IMR-90 (cell line): ENCODE measurements at regions of chr2 and their contacts with region 1.

Region 1: GRCh38 chr2:64644177-64645004 is 9.3 kb downstream of the SERTAD2 start:
- DNase-seq: peak; percentile 81
- ATAC-seq: peak; percentile 92
- H3K4me3 ChIP-seq: peak overlapping the region; percentile 40
- H3K27ac ChIP-seq: peak overlapping the region; percentile 84
- H3K4me1 ChIP-seq: peaks cover 15% of the 10 kb centered on the region
- H3K27me3 ChIP-seq: no peaks in the 10 kb centered on the region
- CTCF ChIP-seq: no peak
- POLR2A ChIP-seq: peak; percentile 70
- RAD21 ChIP-seq: 0 out of 2 replicates have a peak, but pooled peaks have one; percentile 1

Region 2: GRCh38 chr2:63257473-63257872 is 1386.9 kb before region 1 on chr2:
- CTCF ChIA-PET with region 1: no interaction called
- POLR2A ChIA-PET with region 1: no interaction called
- dilution Hi-C with region 1: no loop called
- in situ Hi-C with region 1: no loop called
- intact Hi-C with region 1: no loop called
- DNase-seq: no peak
- ATAC-seq: no peak
- H3K4me3 ChIP-seq: no peak overlapping the region
- H3K27ac ChIP-seq: no peak overlapping the region
- H3K4me1 ChIP-seq: no peaks in the 10 kb centered on the region
- H3K27me3 ChIP-seq: no peaks in the 10 kb centered on the region
- CTCF ChIP-seq: no peak
- POLR2A ChIP-seq: no peak
- RAD21 ChIP-seq: no peak

Region 3: GRCh38 chr2:64523666-64524603 is 120.5 kb before region 1 on chr2 and contains the start of gene AFTPH:
- CTCF ChIA-PET with region 1: no interaction called
- POLR2A ChIA-PET with region 1: no interaction called
- dilution Hi-C with region 1: no loop called
- in situ Hi-C with region 1: no loop called
- intact Hi-C with region 1: loop called (anchors 2 kb)
- DNase-seq: peak; percentile 98
- ATAC-seq: peak; percentile 98
- H3K4me3 ChIP-seq: peak within 1 kb of the TSS; percentile 87
- H3K27ac ChIP-seq: peak within 1 kb of the TSS; percentile 68
- H3K4me1 ChIP-seq: no peaks in the 10 kb centered on the region
- H3K27me3 ChIP-seq: peaks cover 5% of the 10 kb centered on the region
- CTCF ChIP-seq: no peak
- POLR2A ChIP-seq: peak; percentile 60
- RAD21 ChIP-seq: no peak
- total RNA-seq, gene AFTPH: 19.9 and 21.9 TPM in 2 replicates

Region 4: DNA sequence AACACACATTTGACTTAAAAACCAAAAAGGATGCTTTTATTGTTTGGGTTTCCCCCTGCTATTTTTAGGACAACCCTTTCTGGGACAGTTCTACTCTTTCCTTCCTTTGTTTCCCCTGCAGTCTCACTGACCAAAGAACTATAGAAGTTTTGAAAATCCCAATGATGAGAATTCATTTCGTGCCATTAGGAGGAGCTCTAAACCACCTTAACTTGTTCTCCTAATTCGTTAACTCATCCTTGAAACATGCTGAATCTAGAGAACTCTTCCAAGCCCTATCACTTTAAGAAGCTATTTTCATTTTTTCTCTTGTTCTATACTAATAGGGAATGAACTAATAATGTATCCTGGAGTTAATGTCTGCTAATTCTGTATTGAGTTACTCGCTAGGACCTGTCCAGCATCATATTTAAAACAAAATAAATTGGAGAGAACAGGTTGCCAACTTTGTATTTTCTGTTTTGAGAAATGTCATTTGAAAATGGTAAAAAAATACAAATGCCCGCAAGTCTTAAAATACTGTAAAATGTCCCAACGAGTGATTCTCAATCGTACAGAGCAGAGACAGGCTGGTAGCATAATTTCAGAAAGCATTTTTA is 57.4 kb before region 1 on chr2:
- CTCF ChIA-PET with region 1: interaction called, 4 read pairs
- POLR2A ChIA-PET with region 1: no interaction called
- dilution Hi-C with region 1: no loop called
- in situ Hi-C with region 1: no loop called
- intact Hi-C with region 1: loop called (anchors 1 kb)
- DNase-seq: peak; percentile 72
- ATAC-seq: peak; percentile 80
- H3K4me3 ChIP-seq: no peak overlapping the region
- H3K27ac ChIP-seq: no peak overlapping the region
- H3K4me1 ChIP-seq: no peaks in the 10 kb centered on the region
- H3K27me3 ChIP-seq: no peaks in the 10 kb centered on the region
- CTCF ChIP-seq: peak; percentile 77
- POLR2A ChIP-seq: no peak
- RAD21 ChIP-seq: peak; percentile 87

Region 5: DNA sequence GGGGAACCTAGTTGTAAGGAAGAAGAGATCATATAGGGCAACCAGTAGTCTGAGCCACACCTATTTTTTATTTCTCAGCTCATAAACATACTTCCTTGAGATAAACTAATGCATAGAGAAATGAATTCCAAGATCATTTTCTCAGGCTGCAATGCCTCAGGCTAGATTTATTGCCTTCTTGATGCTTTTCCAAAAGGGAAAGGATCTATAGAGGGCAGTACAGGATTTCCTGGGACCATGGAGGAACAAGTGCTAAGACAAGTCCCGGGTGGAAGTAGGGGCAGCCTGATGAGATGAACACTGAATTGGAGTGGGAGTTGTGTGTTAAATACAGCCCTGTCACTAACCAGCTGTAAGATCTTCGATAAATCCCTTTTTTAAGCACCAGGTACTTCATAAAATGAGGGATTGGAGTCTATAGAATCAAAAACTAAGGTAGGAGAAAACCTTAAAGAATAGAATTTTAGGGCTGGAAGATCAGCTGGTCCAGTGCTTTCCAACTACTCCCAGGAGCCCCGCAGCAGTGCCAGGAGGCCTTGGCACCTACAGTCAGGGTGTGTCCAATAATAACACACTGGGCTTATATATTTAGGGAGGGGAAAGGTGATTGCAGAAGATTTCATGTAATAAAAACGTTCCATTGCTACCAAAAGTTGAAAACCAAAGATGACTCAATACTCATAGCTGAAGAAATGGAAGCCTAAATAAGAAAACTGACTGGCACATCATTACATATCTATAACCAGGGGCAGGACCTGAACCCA is 48.8 kb before region 1 on chr2:
- CTCF ChIA-PET with region 1: interaction called, 5 read pairs
- POLR2A ChIA-PET with region 1: no interaction called
- dilution Hi-C with region 1: no loop called
- in situ Hi-C with region 1: no loop called
- intact Hi-C with region 1: loop called (anchors 2 kb)
- DNase-seq: peak; percentile 17
- ATAC-seq: no peak; the same call in 1 of the 2 replicates
- H3K4me3 ChIP-seq: no peak overlapping the region
- H3K27ac ChIP-seq: no peak overlapping the region
- H3K4me1 ChIP-seq: peaks cover 6% of the 10 kb centered on the region
- H3K27me3 ChIP-seq: peaks cover 36% of the 10 kb centered on the region
- CTCF ChIP-seq: peak; percentile 49
- POLR2A ChIP-seq: no peak
- RAD21 ChIP-seq: peak; percentile 39

Region 6: GRCh38 chr2:64767670-64768468 is 123.5 kb after region 1 on chr2:
- CTCF ChIA-PET with region 1: interaction called, 5 read pairs
- POLR2A ChIA-PET with region 1: no interaction called
- dilution Hi-C with region 1: no loop called
- in situ Hi-C with region 1: no loop called
- intact Hi-C with region 1: loop called (anchors 5 kb)
- DNase-seq: peak; percentile 89
- ATAC-seq: peak; percentile 76
- H3K4me3 ChIP-seq: peak overlapping the region; percentile 64
- H3K27ac ChIP-seq: peak overlapping the region; percentile 91
- H3K4me1 ChIP-seq: peaks cover 16% of the 10 kb centered on the region
- H3K27me3 ChIP-seq: no peaks in the 10 kb centered on the region
- CTCF ChIP-seq: no peak
- POLR2A ChIP-seq: peak; percentile 58
- RAD21 ChIP-seq: peak; percentile 32; the same call in 1 of the 2 replicates

Region 7: GRCh38 chr2:64865073-64865830 is 220.9 kb after region 1 on chr2:
- CTCF ChIA-PET with region 1: interaction called, 21 read pairs
- POLR2A ChIA-PET with region 1: no interaction called
- dilution Hi-C with region 1: no loop called
- in situ Hi-C with region 1: no loop called
- intact Hi-C with region 1: loop called (anchors 1 kb)
- DNase-seq: peak; percentile 54
- ATAC-seq: peak; percentile 77
- H3K4me3 ChIP-seq: peak overlapping the region; percentile 58
- H3K27ac ChIP-seq: peak overlapping the region; percentile 3; the same call in 1 of the 2 replicates
- H3K4me1 ChIP-seq: peaks cover 13% of the 10 kb centered on the region
- H3K27me3 ChIP-seq: peaks cover 43% of the 10 kb centered on the region
- CTCF ChIP-seq: peak; percentile 83
- POLR2A ChIP-seq: no peak
- RAD21 ChIP-seq: peak; percentile 90

Region 8: GRCh38 chr2:65040400-65041261 is 396.2 kb after region 1 on chr2:
- CTCF ChIA-PET with region 1: no interaction called
- POLR2A ChIA-PET with region 1: no interaction called
- dilution Hi-C with region 1: no loop called
- in situ Hi-C with region 1: no loop called
- intact Hi-C with region 1: loop called (anchors 10 kb)
- DNase-seq: peak; percentile 84
- ATAC-seq: peak; percentile 100
- H3K4me3 ChIP-seq: peak overlapping the region; percentile 26; the same call in 1 of the 2 replicates
- H3K27ac ChIP-seq: no peak overlapping the region
- H3K4me1 ChIP-seq: no peaks in the 10 kb centered on the region
- H3K27me3 ChIP-seq: no peaks in the 10 kb centered on the region
- CTCF ChIP-seq: peak; percentile 89
- POLR2A ChIP-seq: no peak
- RAD21 ChIP-seq: peak; percentile 93